CD8-positive, alpha-beta T cell (primary cell): ENCODE measurements at regions of chr19 and their contacts with region 1.

Region 1: GRCh38 chr19:17859533-17860330 is at the start of gene RPL18A:
- DNase-seq: peak; percentile 97 to 100 (median 99)
- ATAC-seq: peak; percentile 96
- H3K4me3 ChIP-seq: peak within 1 kb of the TSS; percentile 82 to 94
- H3K4me3 Mint-ChIP-seq: peak within 1 kb of the TSS; percentile 98
- H3K27ac ChIP-seq: peak within 1 kb of the TSS; percentile 64 to 73
- H3K27ac Mint-ChIP-seq: peak within 1 kb of the TSS; percentile 97
- H3K4me1 ChIP-seq: peaks cover 23% of the 10 kb centered on the region
- H3K4me1 Mint-ChIP-seq: peaks cover 39% of the 10 kb centered on the region
- H3K27me3 ChIP-seq: no peaks in the 10 kb centered on the region
- H3K27me3 Mint-ChIP-seq: no peaks in the 10 kb centered on the region
- CTCF ChIP-seq: peak; percentile 75
- total RNA-seq, gene RPL18A: 3,915 to 3,952 TPM

Region 2: DNA sequence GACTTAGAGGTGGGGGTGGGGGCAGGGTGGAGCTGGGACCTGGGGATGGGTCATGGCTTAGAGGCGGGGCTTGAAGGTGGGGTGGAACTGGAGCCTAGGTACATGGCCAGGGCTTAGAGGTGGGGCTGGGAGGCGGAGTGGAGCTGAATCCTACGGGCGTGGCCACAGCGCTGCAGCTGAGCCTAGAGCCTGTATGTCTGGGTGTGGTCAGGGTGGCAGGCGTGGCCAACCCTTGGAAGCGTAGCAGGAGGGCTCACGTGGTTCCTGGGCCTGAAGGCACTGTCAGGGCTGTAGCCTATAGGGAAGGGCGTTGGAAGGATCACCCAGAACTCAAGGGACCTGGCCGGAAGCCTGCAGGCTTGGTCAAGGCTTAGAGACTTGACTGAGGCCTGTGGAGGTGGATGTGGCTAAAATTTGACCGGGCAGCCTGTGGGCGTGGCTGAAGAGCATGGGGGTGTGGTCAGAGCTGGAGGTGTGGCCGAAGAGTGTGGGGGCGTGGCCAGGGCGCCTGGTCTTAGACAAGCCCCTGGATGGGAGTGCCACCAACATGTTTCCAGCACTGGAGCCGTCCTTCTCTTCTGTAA is 280.0 kb before region 1 on chr19:
- CTCF ChIA-PET with region 1: no interaction called
- POLR2A ChIA-PET with region 1: no interaction called
- intact Hi-C with region 1: loop called in 1 of 2 experiments (anchors 1 kb)
- DNase-seq: peak in 2 of 9 experiments; percentile 36 to 43
- ATAC-seq: peak; percentile 52
- H3K4me3 ChIP-seq: no peak overlapping the region
- H3K4me3 Mint-ChIP-seq: no peak overlapping the region
- H3K27ac ChIP-seq: no peak overlapping the region
- H3K27ac Mint-ChIP-seq: peak overlapping the region; percentile 55
- H3K4me1 ChIP-seq: no peaks in the 10 kb centered on the region
- H3K4me1 Mint-ChIP-seq: no peaks in the 10 kb centered on the region
- H3K27me3 ChIP-seq: no peaks in the 10 kb centered on the region
- H3K27me3 Mint-ChIP-seq: no peaks in the 10 kb centered on the region
- CTCF ChIP-seq: no peak

Region 3: DNA sequence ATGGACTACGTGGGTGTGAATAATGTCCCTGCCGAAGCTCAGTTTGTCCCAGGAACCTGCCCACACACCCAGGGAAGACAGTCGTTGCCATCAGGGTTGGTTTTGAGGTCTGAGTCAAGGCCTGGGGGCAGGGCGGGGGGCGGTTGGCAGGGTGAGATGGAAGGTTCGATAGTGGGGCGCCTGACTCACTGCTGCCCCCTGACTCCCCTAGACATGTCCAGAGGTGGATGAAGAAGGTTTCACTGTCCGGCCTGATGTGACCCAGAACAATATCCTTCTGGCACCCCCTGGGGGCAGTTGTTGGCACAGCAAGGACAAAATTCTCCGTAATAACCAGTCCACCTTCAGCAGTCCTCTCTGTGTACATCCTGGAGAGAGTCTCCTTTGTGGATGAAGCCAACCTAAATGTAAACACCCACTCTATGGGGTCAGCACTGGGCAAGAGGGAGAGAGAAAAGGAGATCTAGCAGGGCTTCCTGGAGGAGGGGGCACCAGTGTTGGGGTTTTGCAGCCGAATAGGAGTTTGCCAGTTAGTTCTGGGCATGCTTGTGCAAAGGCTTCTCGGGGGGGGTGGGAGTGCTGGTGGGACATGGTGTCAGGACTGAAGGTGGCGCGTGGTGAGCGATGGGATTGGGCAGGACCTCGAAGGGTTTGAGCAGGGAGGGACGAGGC is 84.4 kb before region 1 on chr19:
- CTCF ChIA-PET with region 1: interaction called, 20 read pairs
- POLR2A ChIA-PET with region 1: no interaction called
- intact Hi-C with region 1: no loop called
- DNase-seq: peak in 5 of 9 experiments; percentile 46 to 61 (median 49)
- ATAC-seq: no peak
- H3K4me3 ChIP-seq: no peak overlapping the region
- H3K4me3 Mint-ChIP-seq: no peak overlapping the region
- H3K27ac ChIP-seq: no peak overlapping the region
- H3K27ac Mint-ChIP-seq: no peak overlapping the region
- H3K4me1 ChIP-seq: no peaks in the 10 kb centered on the region
- H3K4me1 Mint-ChIP-seq: peaks cover 3% of the 10 kb centered on the region
- H3K27me3 ChIP-seq: no peaks in the 10 kb centered on the region
- H3K27me3 Mint-ChIP-seq: no peaks in the 10 kb centered on the region
- CTCF ChIP-seq: peak; percentile 58

Region 4: DNA sequence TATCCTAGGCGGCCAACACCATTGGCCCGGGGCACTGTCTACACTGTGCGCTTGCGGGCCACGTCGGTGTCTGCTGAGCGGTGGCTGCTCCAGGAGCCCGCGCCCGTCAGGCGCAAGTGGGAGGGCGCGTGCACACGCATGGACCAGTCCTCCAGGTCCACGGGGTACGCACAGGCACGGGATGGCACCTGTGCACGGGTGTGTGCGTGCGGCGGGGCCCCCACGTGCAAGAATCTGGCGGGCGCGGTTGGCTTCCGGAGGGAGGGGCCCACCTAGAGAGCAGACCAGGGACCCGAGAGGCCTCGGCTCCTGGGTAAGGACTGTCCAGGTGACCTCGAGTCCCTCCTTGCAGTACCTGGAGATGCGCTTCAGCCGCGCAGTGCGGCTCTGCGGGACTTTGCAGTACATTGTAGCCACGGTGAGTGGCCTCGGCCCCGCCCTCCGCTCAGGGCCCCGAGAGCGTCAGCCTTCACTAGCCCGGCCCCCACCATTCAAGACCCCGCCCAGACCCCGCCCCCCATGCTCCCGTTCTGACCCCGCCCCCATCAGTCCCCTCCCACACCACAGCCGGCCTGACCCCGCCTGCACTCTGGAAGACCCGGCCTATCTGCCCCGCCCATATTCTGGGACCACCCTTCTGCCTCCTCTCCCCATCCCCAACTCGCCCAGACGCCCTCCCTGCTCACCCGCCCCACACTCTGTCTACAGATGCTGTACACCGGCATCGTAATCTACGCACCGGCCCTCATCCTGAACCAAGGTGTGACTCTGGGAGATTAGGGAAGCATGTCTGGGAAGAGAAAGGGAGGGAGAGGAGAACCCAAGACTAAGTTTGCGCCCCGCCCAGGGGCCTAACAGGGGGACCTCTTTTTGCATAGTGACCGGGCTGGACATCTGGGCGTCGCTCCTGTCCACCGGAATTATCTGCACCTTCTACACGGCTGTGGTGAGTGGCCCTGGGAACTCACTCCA is 14.3 kb after region 1 on chr19:
- CTCF ChIA-PET with region 1: interaction called, 11 read pairs
- POLR2A ChIA-PET with region 1: interaction called, 7 read pairs
- intact Hi-C with region 1: loop called in 1 of 2 experiments (anchors 1 kb)
- DNase-seq: peak; percentile 34 to 81 (median 66)
- ATAC-seq: peak; percentile 85
- H3K4me3 ChIP-seq: peak overlapping the region; percentile 47 to 59
- H3K4me3 Mint-ChIP-seq: peak overlapping the region; percentile 81
- H3K27ac ChIP-seq: no peak overlapping the region
- H3K27ac Mint-ChIP-seq: no peak overlapping the region
- H3K4me1 ChIP-seq: peaks cover 32% of the 10 kb centered on the region
- H3K4me1 Mint-ChIP-seq: peaks cover 16% of the 10 kb centered on the region
- H3K27me3 ChIP-seq: peaks cover 0 to 15% of the 10 kb centered on the region in 2 experiments
- H3K27me3 Mint-ChIP-seq: no peaks in the 10 kb centered on the region
- CTCF ChIP-seq: no peak

Region 5: DNA sequence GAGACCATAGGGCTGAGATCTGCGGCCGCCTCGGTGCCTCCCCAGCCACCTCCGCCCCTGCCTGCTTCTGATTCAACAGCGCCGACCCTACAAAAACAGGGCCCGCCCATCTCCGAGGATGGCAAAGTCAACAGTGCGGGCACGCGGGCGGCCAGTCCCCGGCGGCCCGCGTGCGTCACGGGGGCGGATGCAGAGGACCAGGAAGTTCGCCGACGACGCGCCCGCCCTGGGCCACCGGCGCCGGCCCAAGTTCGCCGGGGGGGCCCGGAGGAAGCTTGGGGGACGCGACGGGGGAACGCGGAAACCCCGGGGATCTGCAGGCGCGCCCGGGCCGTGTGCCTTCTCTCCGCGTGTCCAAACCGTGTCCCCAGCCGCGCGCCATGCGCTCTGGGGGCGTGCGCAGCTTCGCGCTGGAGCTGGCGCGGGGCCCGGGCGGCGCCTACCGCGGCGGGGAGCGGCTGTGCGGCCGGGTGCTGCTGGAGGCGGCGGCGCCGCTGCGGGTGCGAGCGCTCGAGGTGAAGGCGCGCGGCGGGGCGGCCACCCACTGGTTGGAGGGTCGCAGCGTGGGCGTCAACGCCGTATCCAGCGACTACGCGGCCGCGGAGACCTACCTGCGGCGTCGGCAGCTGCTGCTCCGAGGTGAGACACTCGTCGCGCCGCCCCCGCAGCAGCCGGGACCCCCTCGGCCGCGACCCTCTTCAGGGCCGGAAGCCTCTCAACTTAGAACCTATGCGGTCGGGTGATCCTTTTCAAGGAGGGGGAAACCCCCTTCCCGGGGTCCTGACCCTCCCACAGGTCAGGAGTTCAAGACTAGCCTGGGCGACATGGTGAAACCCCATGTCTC is 141.4 kb after region 1 on chr19:
- CTCF ChIA-PET with region 1: interaction called, 16 read pairs
- POLR2A ChIA-PET with region 1: interaction called, 16 read pairs
- intact Hi-C with region 1: loop called (anchors 1 kb)
- DNase-seq: peak; percentile 90 to 99 (median 96)
- ATAC-seq: peak; percentile 81
- H3K4me3 ChIP-seq: peak overlapping the region; percentile 65 to 69
- H3K4me3 Mint-ChIP-seq: peak overlapping the region; percentile 92
- H3K27ac ChIP-seq: peak overlapping the region; percentile 94
- H3K27ac Mint-ChIP-seq: peak overlapping the region; percentile 98
- H3K4me1 ChIP-seq: peaks cover 29% of the 10 kb centered on the region
- H3K4me1 Mint-ChIP-seq: peaks cover 32% of the 10 kb centered on the region
- H3K27me3 ChIP-seq: no peaks in the 10 kb centered on the region
- H3K27me3 Mint-ChIP-seq: no peaks in the 10 kb centered on the region
- CTCF ChIP-seq: no peak

Region 6: DNA sequence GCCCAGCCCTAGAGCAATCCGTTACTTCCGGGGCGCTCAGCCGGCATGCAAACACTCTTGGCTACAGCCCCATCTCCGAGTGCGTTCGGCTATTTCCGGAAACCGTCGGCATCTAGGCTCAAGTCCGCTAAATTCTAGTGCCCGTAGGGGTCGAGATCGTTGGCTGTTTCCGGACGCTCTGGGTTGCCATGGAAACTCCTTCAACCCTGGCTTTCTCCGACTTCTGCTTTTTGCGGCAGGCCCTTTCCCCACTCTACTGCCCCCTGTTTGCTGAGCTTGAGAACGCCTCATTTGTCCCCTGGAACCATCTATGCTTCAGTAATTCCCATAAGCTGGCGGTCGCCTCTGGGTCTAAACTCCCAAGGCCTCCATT is 292.7 kb after region 1 on chr19:
- CTCF ChIA-PET with region 1: no interaction called
- POLR2A ChIA-PET with region 1: no interaction called
- intact Hi-C with region 1: loop called in 1 of 2 experiments (anchors 10 kb)
- DNase-seq: peak; percentile 94 to 99 (median 99)
- ATAC-seq: peak; percentile 65
- H3K4me3 ChIP-seq: peak overlapping the region; percentile 66 to 71
- H3K4me3 Mint-ChIP-seq: peak overlapping the region; percentile 84
- H3K27ac ChIP-seq: peak overlapping the region; percentile 66 to 87
- H3K27ac Mint-ChIP-seq: peak overlapping the region; percentile 95
- H3K4me1 ChIP-seq: peaks cover 17% of the 10 kb centered on the region
- H3K4me1 Mint-ChIP-seq: peaks cover 23% of the 10 kb centered on the region
- H3K27me3 ChIP-seq: no peaks in the 10 kb centered on the region
- H3K27me3 Mint-ChIP-seq: no peaks in the 10 kb centered on the region
- CTCF ChIP-seq: peak; percentile 87